ENCODE measurements at regions of chr2 and their contacts with region 1.

Region 1: DNA sequence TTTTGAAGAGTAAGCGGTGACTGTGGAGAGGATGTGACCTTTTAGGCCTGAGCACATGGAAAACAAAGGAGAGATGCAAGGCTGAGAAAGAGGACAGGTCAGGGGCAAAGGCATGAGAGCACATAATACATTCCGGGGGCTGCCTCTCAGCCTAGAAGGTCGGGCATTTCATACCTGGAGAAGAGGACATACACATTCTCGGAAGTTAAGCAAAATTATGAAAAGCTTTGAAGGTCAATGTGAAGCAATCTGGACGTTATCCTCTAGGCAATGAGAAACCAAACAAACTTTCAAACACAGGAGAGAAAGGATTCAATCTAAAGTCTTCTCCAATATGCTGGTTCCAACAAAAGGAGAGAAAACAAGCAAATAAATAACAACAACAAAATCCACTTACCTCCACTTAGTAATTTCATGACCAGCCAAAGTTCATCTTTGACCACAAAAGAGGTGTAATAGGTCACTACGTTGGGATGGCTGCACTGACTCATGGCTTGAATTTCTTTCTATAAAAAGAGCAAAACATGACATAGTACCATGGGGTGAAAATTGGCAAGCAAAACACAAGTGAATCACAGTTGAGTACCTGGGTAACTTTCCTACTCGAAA is 80.4 kb downstream of the STK39 start:
- DNase-seq: no peak
- H3K4me3 Mint-ChIP-seq: peak overlapping the region; percentile 22
- H3K27ac Mint-ChIP-seq: peak overlapping the region; percentile 86
- H3K4me1 Mint-ChIP-seq: peaks cover 45% of the 10 kb centered on the region
- H3K27me3 Mint-ChIP-seq: no peaks in the 10 kb centered on the region

Region 2: DNA sequence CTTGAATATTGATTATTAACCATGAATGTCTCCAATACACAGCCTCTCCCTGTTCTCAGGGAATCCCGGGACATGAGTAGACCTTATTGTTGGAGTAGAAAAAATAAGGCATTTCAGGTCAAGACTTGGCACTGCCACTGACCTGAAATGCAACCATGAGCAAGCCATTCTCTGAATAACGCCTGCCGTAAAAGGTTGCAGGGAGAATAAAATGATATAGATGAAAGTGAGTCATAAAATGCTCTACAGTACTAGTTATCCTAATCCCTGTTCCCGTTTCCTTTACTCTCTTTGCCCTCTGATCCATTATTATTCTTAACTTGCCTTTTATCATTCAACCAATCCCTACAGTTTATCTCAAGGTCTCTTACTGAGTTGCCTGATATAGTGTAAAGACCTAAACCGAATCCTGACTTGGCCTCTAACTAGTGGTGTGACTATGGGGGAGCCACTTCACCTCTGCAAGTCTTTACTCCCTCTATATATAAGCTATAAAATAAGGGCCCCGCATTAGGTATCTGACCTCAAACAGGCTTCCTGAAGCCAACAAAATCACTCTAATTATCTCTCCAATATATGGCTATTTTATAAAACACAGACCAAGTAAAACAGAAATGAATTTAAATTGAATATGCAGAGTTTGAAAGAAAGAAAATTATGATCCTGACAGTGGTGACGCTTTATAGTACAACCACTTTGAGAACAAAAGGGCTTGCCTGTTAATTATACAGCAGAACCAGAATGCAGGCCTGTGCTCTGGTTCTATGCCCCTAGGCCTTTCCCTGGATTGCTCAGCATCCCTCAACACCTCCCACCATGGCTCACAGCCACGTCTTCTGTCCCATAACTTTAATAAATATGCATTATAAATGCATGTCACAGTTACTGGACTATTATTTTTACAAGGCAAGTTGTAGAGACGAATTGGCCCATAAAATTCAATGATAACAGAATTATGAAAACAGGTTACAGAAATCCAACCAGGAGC is 102.7 kb before region 1 on chr2:
- intact Hi-C with region 1: no loop called
- DNase-seq: no peak
- H3K4me3 Mint-ChIP-seq: no peak overlapping the region
- H3K27ac Mint-ChIP-seq: no peak overlapping the region
- H3K4me1 Mint-ChIP-seq: no peaks in the 10 kb centered on the region
- H3K27me3 Mint-ChIP-seq: no peaks in the 10 kb centered on the region

Region 3: GRCh38 chr2:168149986-168150385 is 17.0 kb before region 1 on chr2:
- intact Hi-C with region 1: loop called (anchors 2 kb)
- DNase-seq: no peak
- H3K4me3 Mint-ChIP-seq: no peak overlapping the region
- H3K27ac Mint-ChIP-seq: no peak overlapping the region
- H3K4me1 Mint-ChIP-seq: peaks cover 19% of the 10 kb centered on the region
- H3K27me3 Mint-ChIP-seq: no peaks in the 10 kb centered on the region

Region 4: DNA sequence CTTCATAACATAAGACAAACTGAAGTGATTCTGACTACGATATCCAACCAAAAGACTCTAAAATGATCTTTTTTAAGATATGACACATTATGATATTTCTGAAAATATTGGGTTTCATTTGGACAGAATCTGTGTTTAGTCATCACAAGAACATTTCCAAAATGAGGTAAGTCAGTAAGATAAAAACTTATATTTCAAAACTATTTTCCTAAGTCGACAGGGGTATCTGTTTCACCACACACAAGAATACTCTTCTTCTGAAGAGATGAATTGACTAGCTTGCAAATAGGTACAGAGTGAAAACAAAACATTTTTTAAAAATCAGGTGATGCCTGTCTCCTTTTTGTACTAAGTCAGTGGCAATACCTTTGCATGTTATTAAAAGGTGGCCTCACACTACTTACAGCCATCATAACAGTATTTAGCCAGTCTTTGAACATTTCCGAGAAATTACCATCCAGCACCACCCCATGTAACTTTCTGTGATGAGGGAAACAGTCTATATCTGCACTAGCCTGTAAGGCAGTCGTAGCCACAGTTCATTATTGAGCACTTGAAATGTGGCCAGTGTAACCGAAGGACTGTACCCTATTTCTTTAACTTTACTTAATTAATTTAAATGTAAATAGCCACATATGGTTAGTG is 66.9 kb after region 1 on chr2:
- intact Hi-C with region 1: loop called (anchors 2 kb)
- DNase-seq: no peak
- H3K4me3 Mint-ChIP-seq: no peak overlapping the region
- H3K27ac Mint-ChIP-seq: peak overlapping the region; percentile 63
- H3K4me1 Mint-ChIP-seq: peaks cover 35% of the 10 kb centered on the region
- H3K27me3 Mint-ChIP-seq: no peaks in the 10 kb centered on the region